ENCODE measurements at regions of chr7 and their contacts with region 1.

Region 1: GRCh38 chr7:71733107-71733870 is 601.3 kb downstream of the GALNT17 start:
- DNase-seq: peak; percentile 61 to 99 (median 86)
- ATAC-seq: peak; percentile 89 to 95 (median 90)
- H3K4me3 ChIP-seq: peak overlapping the region in 2 of 4 donors; percentile 10 to 33
- H3K27ac ChIP-seq: no peak overlapping the region
- H3K4me1 ChIP-seq: no peaks in the 10 kb centered on the region
- H3K27me3 ChIP-seq: no peaks in the 10 kb centered on the region
- CTCF ChIP-seq: peak; percentile 87 to 93 (median 88)

Region 2: GRCh38 chr7:70856866-70857630 is 876.2 kb before region 1 on chr7:
- intact Hi-C with region 1: loop called in 2 of 3 experiments (anchors 5 kb)
- DNase-seq: peak; percentile 37 to 95 (median 76)
- ATAC-seq: peak in 3 of 4 donors; percentile 54 to 58 (median 57)
- H3K4me3 ChIP-seq: no peak overlapping the region
- H3K27ac ChIP-seq: no peak overlapping the region
- H3K4me1 ChIP-seq: no peaks in the 10 kb centered on the region
- H3K27me3 ChIP-seq: no peaks in the 10 kb centered on the region
- CTCF ChIP-seq: peak; percentile 93 to 97 (median 94)

Measured in pancreas (tissue), 10 donors.